ENCODE measurements at regions of chr5 and their contacts with region 1.

Region 1: GRCh38 chr5:91383027-91383955 is at the start of gene ARRDC3:
- DNase-seq: peak; percentile 98
- ATAC-seq: peak; percentile 67
- H3K4me3 Mint-ChIP-seq: peak within 1 kb of the TSS; percentile 98
- H3K27ac Mint-ChIP-seq: peak within 1 kb of the TSS; percentile 96
- H3K4me1 Mint-ChIP-seq: peaks cover 16% of the 10 kb centered on the region
- H3K27me3 Mint-ChIP-seq: no peaks in the 10 kb centered on the region
- total RNA-seq, gene ARRDC3: 21.7 to 21.9 TPM

Region 2: GRCh38 chr5:90409318-90410177 is 973.7 kb before region 1 on chr5 and contains the start of gene CETN3:
- CTCF ChIA-PET with region 1: no interaction called
- POLR2A ChIA-PET with region 1: no interaction called
- intact Hi-C with region 1: loop called (anchors 2 to 5 kb)
- DNase-seq: peak; percentile 94
- ATAC-seq: peak; percentile 96
- H3K4me3 Mint-ChIP-seq: no peak within 1 kb of the TSS
- H3K27ac Mint-ChIP-seq: no peak within 1 kb of the TSS
- H3K4me1 Mint-ChIP-seq: peaks cover 23% of the 10 kb centered on the region
- H3K27me3 Mint-ChIP-seq: no peaks in the 10 kb centered on the region
- total RNA-seq, gene CETN3: 52.8 to 53.5 TPM

Region 3: DNA sequence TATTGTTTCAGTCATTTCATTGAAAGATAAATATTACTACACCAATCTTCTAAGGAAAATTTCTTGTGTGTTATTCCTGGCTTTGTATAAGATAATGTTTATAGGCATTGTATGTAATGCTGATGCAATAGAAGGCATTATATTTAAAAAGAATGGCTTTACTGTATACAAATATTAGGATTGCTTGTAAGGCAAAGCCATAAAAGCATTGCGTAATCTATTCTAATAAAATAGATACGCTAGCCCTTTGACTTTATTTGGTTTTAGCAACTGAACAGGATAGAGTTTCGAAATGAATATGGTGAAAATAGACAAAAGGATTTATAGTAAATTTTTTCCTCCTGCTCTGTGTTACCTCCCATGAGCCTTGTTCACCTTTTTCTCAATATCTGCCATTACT is 848.4 kb before region 1 on chr5:
- CTCF ChIA-PET with region 1: no interaction called
- POLR2A ChIA-PET with region 1: no interaction called
- intact Hi-C with region 1: no loop called
- DNase-seq: no peak
- ATAC-seq: no peak
- H3K4me3 Mint-ChIP-seq: no peak overlapping the region
- H3K27ac Mint-ChIP-seq: no peak overlapping the region
- H3K4me1 Mint-ChIP-seq: no peaks in the 10 kb centered on the region
- H3K27me3 Mint-ChIP-seq: peaks cover 17% of the 10 kb centered on the region

Region 4: GRCh38 chr5:90844931-90845330 is 538.4 kb before region 1 on chr5:
- CTCF ChIA-PET with region 1: no interaction called
- POLR2A ChIA-PET with region 1: no interaction called
- intact Hi-C with region 1: no loop called
- DNase-seq: no peak
- ATAC-seq: no peak
- H3K4me3 Mint-ChIP-seq: no peak overlapping the region
- H3K27ac Mint-ChIP-seq: no peak overlapping the region
- H3K4me1 Mint-ChIP-seq: peaks cover 11% of the 10 kb centered on the region
- H3K27me3 Mint-ChIP-seq: peaks cover 27% of the 10 kb centered on the region

Region 5: GRCh38 chr5:90873033-90873517 is 510.2 kb before region 1 on chr5:
- CTCF ChIA-PET with region 1: interaction called, 13 read pairs
- POLR2A ChIA-PET with region 1: interaction called, 4 read pairs
- intact Hi-C with region 1: no loop called
- DNase-seq: peak; percentile 50
- ATAC-seq: peak; percentile 86
- H3K4me3 Mint-ChIP-seq: no peak overlapping the region
- H3K27ac Mint-ChIP-seq: no peak overlapping the region
- H3K4me1 Mint-ChIP-seq: peaks cover 30% of the 10 kb centered on the region
- H3K27me3 Mint-ChIP-seq: peaks cover 38% of the 10 kb centered on the region

Region 6: GRCh38 chr5:91162534-91163381 is 220.5 kb before region 1 on chr5:
- CTCF ChIA-PET with region 1: interaction called, 14 read pairs
- POLR2A ChIA-PET with region 1: no interaction called
- intact Hi-C with region 1: loop called (anchors 1 to 2 kb)
- DNase-seq: peak; percentile 85
- ATAC-seq: peak; percentile 99
- H3K4me3 Mint-ChIP-seq: no peak overlapping the region
- H3K27ac Mint-ChIP-seq: peak overlapping the region; percentile 74
- H3K4me1 Mint-ChIP-seq: peaks cover 21% of the 10 kb centered on the region
- H3K27me3 Mint-ChIP-seq: peaks cover 1% of the 10 kb centered on the region

Region 7: GRCh38 chr5:91219803-91220371 is 163.4 kb before region 1 on chr5:
- CTCF ChIA-PET with region 1: interaction called, 113 read pairs
- POLR2A ChIA-PET with region 1: interaction called, 3 read pairs
- intact Hi-C with region 1: no loop called
- DNase-seq: peak; percentile 66
- ATAC-seq: peak; percentile 51
- H3K4me3 Mint-ChIP-seq: no peak overlapping the region
- H3K27ac Mint-ChIP-seq: no peak overlapping the region
- H3K4me1 Mint-ChIP-seq: no peaks in the 10 kb centered on the region
- H3K27me3 Mint-ChIP-seq: no peaks in the 10 kb centered on the region

Region 8: DNA sequence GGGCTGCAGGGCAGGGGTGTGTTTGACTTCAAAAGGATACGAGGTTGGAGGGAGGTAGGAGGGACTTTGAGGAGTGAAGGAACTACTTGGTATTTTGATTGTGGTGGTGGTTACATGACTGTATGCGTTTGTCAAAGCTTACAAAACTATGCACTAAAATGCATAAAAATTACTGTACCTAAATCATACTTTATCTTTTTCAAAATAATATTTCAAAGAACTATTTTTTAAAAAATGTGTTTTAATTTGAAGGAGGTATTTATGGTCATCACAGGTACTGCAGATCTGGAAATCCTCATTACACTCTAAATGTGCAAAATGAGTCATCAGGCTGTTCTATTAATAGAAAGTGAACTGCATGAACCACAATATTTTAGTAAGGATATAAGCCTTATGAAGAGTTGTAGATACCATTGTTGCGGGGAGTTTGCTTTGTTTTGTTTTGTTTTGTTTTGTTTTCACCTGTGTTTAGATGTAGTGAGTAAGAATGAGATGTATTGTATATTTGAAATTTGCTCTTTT is 117.0 kb before region 1 on chr5:
- CTCF ChIA-PET with region 1: interaction called, 10 read pairs
- POLR2A ChIA-PET with region 1: no interaction called
- intact Hi-C with region 1: no loop called
- DNase-seq: no peak
- ATAC-seq: peak; percentile 79
- H3K4me3 Mint-ChIP-seq: no peak overlapping the region
- H3K27ac Mint-ChIP-seq: peak overlapping the region; percentile 6
- H3K4me1 Mint-ChIP-seq: peaks cover 19% of the 10 kb centered on the region
- H3K27me3 Mint-ChIP-seq: no peaks in the 10 kb centered on the region

Region 9: GRCh38 chr5:91656891-91657290 is 273.6 kb after region 1 on chr5:
- CTCF ChIA-PET with region 1: no interaction called
- POLR2A ChIA-PET with region 1: no interaction called
- intact Hi-C with region 1: no loop called
- DNase-seq: no peak
- ATAC-seq: no peak
- H3K4me3 Mint-ChIP-seq: no peak overlapping the region
- H3K27ac Mint-ChIP-seq: no peak overlapping the region
- H3K4me1 Mint-ChIP-seq: no peaks in the 10 kb centered on the region
- H3K27me3 Mint-ChIP-seq: no peaks in the 10 kb centered on the region